ENCODE measurements at regions of chr17 and their contacts with region 1.

Region 1: GRCh38 chr17:75261336-75262111 is at the starts of genes GGA3 and MRPS7:
- DNase-seq: peak; percentile 99
- H3K4me3 Mint-ChIP-seq: peak within 1 kb of the TSS; percentile 94
- H3K27ac Mint-ChIP-seq: peak within 1 kb of the TSS; percentile 99
- H3K4me1 Mint-ChIP-seq: peaks cover 37% of the 10 kb centered on the region
- H3K27me3 Mint-ChIP-seq: no peaks in the 10 kb centered on the region
- total RNA-seq, gene GGA3: 84.2 and 86.9 TPM in 2 replicates
- total RNA-seq, gene MRPS7: 121 and 127 TPM in 2 replicates

Region 2: DNA sequence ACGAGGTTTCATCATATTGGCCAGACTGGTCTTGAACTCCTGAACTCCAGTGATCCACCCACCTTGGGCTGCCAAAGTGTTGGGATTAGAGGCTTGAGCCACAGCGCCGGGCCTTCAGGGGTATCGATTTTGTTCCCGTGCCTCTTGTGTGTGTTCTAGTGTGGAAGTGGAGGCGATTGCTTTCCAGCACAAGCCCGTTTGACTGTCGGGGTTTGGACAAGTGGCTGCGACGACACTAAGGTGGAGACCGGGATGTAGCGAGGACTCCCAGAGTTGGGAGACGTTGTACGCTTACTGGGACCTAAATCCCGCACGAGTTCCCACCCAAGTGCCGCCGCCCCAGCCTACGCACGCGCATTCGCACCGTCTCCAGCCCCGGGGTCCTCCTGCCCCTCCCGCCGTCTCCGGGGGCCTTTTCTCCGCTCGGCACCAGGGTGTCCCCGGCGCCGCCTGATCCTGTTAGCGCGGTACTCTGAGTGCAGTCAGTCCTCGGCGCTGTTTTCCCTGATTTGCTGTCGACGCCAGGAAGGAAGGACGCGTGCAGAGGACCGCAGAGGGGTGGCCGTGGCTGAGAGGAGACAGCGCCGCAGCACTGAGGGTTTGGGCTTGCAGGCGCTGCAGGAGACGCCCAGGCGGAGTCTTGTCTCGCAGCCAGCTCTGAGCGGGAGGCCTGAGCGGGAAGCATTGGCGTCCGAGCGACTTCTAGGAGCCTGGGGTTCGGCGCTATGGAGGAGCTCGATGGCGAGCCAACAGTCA is 56.3 kb before region 1 on chr17 and contains the start of gene NUP85:
- intact Hi-C with region 1: loop called (anchors 1 kb)
- DNase-seq: peak; percentile 98
- H3K4me3 Mint-ChIP-seq: peak within 1 kb of the TSS; percentile 97
- H3K27ac Mint-ChIP-seq: peak within 1 kb of the TSS; percentile 99
- H3K4me1 Mint-ChIP-seq: peaks cover 14% of the 10 kb centered on the region
- H3K27me3 Mint-ChIP-seq: no peaks in the 10 kb centered on the region
- total RNA-seq, gene NUP85: 125 and 136 TPM in 2 replicates

Region 3: GRCh38 chr17:75250009-75250471 is 11.5 kb before region 1 on chr17:
- intact Hi-C with region 1: loop called (anchors 1 kb)
- DNase-seq: peak; percentile 90
- H3K4me3 Mint-ChIP-seq: peak overlapping the region; percentile 86
- H3K27ac Mint-ChIP-seq: peak overlapping the region; percentile 98
- H3K4me1 Mint-ChIP-seq: peaks cover 52% of the 10 kb centered on the region
- H3K27me3 Mint-ChIP-seq: no peaks in the 10 kb centered on the region